ENCODE measurements at regions of chr17 and their contacts with region 1.

Region 1: DNA sequence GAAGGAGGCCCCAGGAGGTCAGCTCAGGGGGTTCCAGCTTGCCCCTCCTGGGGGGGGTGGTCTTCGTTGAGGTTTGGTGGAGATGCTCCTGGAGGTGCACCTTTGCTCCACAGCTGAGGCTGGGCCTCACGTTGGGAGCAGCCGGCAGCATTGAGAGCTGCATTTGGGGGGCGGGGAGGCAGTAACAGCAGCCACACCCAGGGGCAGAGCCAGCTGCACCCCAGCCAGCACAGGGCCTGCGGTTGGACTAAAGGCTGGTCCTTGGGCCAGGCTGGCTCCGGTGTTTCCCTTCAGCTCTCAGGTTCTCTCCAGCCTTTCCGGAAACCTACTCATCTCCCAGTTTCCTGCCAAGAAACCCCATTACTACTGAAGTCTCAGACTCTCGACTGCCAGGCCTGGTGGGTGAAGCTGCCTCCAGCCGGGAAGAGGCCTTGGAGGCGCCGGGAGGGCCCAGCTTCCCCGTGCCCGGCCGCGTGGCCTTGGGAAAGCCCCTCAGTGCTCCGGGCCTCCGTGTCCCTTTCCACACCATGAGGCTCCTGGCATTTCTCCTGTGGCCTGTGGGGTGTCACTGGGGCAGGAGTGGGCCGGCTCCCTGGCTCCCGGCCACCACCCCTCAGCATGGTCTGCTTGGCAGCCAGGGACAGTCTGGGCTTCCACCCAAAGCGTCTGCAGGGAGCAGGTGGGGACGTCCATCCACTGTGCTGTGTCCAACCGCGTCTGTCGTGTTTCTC is 14.0 kb upstream of the BAIAP2 start:
- DNase-seq: peak in 2 of 3 donors; percentile 46 to 52
- ATAC-seq: no peak
- H3K4me3 ChIP-seq: no peak overlapping the region
- H3K27ac ChIP-seq: no peak overlapping the region
- H3K4me1 ChIP-seq: peaks cover 0 to 18% (median 5%) of the 10 kb centered on the region in 4 donors
- H3K27me3 ChIP-seq: no peaks in the 10 kb centered on the region
- CTCF ChIP-seq: no peak
- POLR2A ChIP-seq: no peak

Region 2: GRCh38 chr17:81094509-81095382 is 73.8 kb after region 1 on chr17:
- intact Hi-C with region 1: loop called in 1 of 2 experiments (anchors 10 kb)
- DNase-seq: peak; percentile 62 to 90 (median 78)
- ATAC-seq: peak; percentile 43 to 74 (median 58)
- H3K4me3 ChIP-seq: no peak overlapping the region
- H3K27ac ChIP-seq: peak overlapping the region; percentile 12 to 79 (median 38)
- H3K4me1 ChIP-seq: peaks cover 0 to 38% (median 18%) of the 10 kb centered on the region in 4 donors
- H3K27me3 ChIP-seq: no peaks in the 10 kb centered on the region
- CTCF ChIP-seq: no peak
- POLR2A ChIP-seq: peak; percentile 17

Region 3: GRCh38 chr17:81101614-81102306 is 80.8 kb after region 1 on chr17:
- intact Hi-C with region 1: loop called (anchors 5 to 10 kb)
- DNase-seq: peak; percentile 90 to 94 (median 93)
- ATAC-seq: peak; percentile 83 to 91 (median 85)
- H3K4me3 ChIP-seq: no peak overlapping the region
- H3K27ac ChIP-seq: peak overlapping the region in 2 of 3 donors; percentile 41 to 57
- H3K4me1 ChIP-seq: peaks cover 0 to 31% (median 14%) of the 10 kb centered on the region in 4 donors
- H3K27me3 ChIP-seq: no peaks in the 10 kb centered on the region
- CTCF ChIP-seq: peak in 3 of 4 donors; percentile 100
- POLR2A ChIP-seq: no peak

Region 4: DNA sequence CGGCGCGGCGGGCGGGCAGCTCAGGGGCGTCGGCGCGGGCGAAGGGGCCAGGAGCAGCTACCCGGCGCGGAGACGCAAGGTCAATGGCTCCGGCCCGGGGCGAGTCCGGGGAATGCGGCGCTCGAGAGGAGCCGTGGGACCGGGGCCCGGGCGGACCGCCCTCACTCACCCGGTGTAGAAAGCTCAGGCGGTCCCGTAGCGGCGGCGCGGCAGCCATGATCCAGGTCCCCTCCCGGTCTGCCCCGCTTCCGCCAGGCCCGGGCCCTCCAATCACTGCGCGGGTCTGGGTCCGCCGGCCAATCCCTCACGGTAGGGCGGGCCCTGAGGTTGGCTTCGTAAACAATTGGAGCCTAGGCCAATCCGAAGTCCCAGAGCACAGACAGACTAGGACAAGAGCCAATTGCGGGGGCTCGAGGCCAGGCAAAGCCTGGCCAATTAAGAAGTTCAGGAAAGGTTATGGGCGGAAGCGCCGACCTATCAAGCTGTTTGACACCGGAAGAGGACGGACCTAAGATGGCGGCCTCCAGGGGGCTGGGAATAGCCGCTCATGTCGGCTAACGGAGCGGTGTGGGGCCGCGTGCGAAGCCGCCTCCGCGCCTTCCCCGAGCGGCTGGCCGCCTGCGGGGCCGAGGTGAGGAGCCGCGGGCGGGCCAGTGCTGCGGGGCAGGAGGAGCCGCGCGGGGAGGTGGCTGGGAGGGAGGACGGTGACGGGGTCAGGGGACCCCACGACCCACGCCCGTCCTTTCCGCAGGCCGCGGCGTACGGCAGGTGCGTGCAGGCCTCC is 218.1 kb after region 1 on chr17 and contains the starts of genes NDUFAF8 and TEPSIN:
- intact Hi-C with region 1: loop called in 1 of 2 experiments (anchors 10 kb)
- DNase-seq: peak; percentile 96 to 98 (median 98)
- ATAC-seq: peak; percentile 92 to 97 (median 96)
- H3K4me3 ChIP-seq: peak within 1 kb of the TSS; percentile 98 to 99 (median 99)
- H3K27ac ChIP-seq: peak within 1 kb of the TSS; percentile 32 to 73 (median 62)
- H3K4me1 ChIP-seq: peaks cover 0 to 12% (median 5%) of the 10 kb centered on the region in 4 donors
- H3K27me3 ChIP-seq: no peaks in the 10 kb centered on the region
- CTCF ChIP-seq: no peak
- POLR2A ChIP-seq: peak; percentile 22
- total RNA-seq, gene NDUFAF8: 15.7 to 35.9 (median 23.3) TPM
- total RNA-seq, gene TEPSIN: 11.9 to 27.6 (median 18.1) TPM

Measured in right lobe of liver (tissue), 6 donors.